ENCODE measurements at regions of chr10 and their contacts with region 1.

Region 1: DNA sequence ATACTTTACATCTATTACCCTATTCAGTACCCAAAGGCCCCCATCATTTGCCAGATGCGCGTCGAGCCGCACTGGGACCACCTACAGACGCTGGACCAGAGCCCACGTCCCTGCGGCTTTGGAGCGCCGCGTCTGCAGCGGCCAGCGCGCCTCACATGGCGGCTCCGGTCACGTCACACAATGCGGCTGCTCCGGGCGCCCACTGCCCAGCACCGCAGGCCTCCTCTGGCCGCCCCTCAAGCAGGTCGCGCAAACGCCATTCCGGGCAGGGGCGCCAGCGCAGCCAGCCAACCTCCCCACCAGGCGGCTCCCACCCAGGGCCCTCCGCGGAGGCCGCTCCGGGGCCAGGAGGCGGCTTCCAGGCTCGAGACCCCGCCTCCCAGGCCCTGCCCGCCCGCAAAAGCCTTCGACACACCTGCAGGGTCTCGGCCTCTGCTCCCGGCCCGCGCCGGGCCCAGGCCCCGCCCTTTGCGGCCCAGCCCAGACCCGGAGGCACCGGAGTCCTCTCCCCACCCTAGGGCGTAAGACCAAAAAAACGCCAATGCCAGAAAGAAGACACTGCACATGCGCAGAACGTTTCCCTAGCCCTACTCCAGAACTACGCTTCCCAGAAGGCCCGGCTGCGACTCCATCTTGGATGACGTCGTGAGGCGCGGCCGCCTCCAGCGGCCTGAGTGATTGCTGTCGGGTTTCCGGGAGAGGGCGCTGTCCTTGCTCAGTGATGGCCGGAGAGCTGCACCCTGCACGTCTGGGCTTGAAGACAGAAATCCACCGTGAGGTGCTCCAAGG is at the start of gene ZNF25:
- DNase-seq: peak; percentile 95 to 100 (median 98)
- ATAC-seq: peak; percentile 87
- H3K4me3 ChIP-seq: peak within 1 kb of the TSS; percentile 62 to 74
- H3K4me3 Mint-ChIP-seq: peak within 1 kb of the TSS; percentile 89
- H3K27ac ChIP-seq: peak within 1 kb of the TSS; percentile 84 to 85
- H3K27ac Mint-ChIP-seq: peak within 1 kb of the TSS; percentile 94
- H3K4me1 ChIP-seq: peaks cover 15% of the 10 kb centered on the region
- H3K4me1 Mint-ChIP-seq: peaks cover 29% of the 10 kb centered on the region
- H3K27me3 ChIP-seq: no peaks in the 10 kb centered on the region
- H3K27me3 Mint-ChIP-seq: no peaks in the 10 kb centered on the region
- CTCF ChIP-seq: peak; percentile 87
- total RNA-seq, gene ZNF25: 3.0 to 3.7 TPM

Region 2: GRCh38 chr10:37857287-37858211 is 118.7 kb before region 1 on chr10 and contains the start of gene ZNF248:
- CTCF ChIA-PET with region 1: interaction called, 4 read pairs
- POLR2A ChIA-PET with region 1: interaction called, 5 read pairs
- intact Hi-C with region 1: loop called (anchors 1 kb)
- DNase-seq: peak; percentile 89 to 98 (median 94)
- ATAC-seq: peak; percentile 96
- H3K4me3 ChIP-seq: peak within 1 kb of the TSS; percentile 86 to 96
- H3K4me3 Mint-ChIP-seq: peak within 1 kb of the TSS; percentile 91
- H3K27ac ChIP-seq: peak within 1 kb of the TSS; percentile 89 to 96
- H3K27ac Mint-ChIP-seq: peak within 1 kb of the TSS; percentile 99
- H3K4me1 ChIP-seq: peaks cover 27% of the 10 kb centered on the region
- H3K4me1 Mint-ChIP-seq: peaks cover 41% of the 10 kb centered on the region
- H3K27me3 ChIP-seq: no peaks in the 10 kb centered on the region
- H3K27me3 Mint-ChIP-seq: no peaks in the 10 kb centered on the region
- CTCF ChIP-seq: no peak
- total RNA-seq, gene ZNF248: 2.3 to 2.9 TPM

Region 3: GRCh38 chr10:38010119-38010903 is 34.0 kb after region 1 on chr10 and contains the start of gene ZNF33A:
- CTCF ChIA-PET with region 1: interaction called, 18 read pairs
- POLR2A ChIA-PET with region 1: interaction called, 19 read pairs
- intact Hi-C with region 1: loop called (anchors 1 kb)
- DNase-seq: peak; percentile 79 to 98 (median 91)
- ATAC-seq: peak; percentile 82
- H3K4me3 ChIP-seq: peak within 1 kb of the TSS; percentile 74 to 78
- H3K4me3 Mint-ChIP-seq: peak within 1 kb of the TSS; percentile 81
- H3K27ac ChIP-seq: peak within 1 kb of the TSS; percentile 98 to 99
- H3K27ac Mint-ChIP-seq: peak within 1 kb of the TSS; percentile 100
- H3K4me1 ChIP-seq: peaks cover 14% of the 10 kb centered on the region
- H3K4me1 Mint-ChIP-seq: peaks cover 39% of the 10 kb centered on the region
- H3K27me3 ChIP-seq: no peaks in the 10 kb centered on the region
- H3K27me3 Mint-ChIP-seq: no peaks in the 10 kb centered on the region
- CTCF ChIP-seq: no peak
- total RNA-seq, gene ZNF33A: 24.6 to 25.9 TPM

Region 4: DNA sequence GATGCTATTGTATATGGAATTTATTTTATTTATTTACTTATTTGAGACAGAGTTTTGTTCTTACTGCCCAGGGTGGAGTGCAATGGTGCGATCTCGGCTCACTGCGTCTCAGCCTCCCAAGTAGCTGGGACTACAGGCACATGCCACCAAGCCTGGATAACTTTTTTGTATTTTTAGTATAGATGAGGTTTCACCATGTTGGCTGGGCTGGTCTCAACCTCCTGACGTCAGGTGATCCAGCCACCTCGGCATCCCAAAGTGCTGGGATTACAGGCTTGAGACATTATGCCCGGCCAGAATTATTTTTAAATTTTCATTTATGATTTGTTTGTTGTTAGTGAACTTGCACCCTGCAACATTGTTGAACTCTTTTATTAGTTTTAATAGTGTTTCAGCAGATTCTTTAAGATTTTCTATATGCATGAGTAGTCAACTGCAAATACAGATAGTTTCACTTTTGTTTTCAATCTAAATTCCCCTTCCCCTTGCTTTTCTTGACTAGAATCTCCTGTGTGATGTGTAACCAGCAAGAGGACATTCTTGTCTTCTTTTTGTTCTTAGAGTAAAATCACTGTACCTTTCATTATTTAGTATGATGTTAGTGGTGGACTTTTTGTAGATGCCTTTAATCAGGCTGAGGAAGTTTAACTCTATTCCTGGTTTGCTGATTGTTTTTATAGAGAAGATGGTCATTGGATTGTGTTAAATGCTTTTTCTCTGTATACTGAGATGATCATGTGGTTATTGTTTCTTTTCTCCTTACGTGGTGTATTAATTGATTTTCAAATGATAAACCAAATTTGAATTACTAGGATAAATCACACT is 62.0 kb after region 1 on chr10:
- CTCF ChIA-PET with region 1: no interaction called
- POLR2A ChIA-PET with region 1: no interaction called
- intact Hi-C with region 1: loop called in 1 of 2 experiments (anchors 1 kb)
- DNase-seq: peak in 2 of 9 experiments; percentile 37 to 62
- ATAC-seq: peak; percentile 66
- H3K4me3 ChIP-seq: peak overlapping the region in 1 of 2 experiments; percentile 37
- H3K4me3 Mint-ChIP-seq: peak overlapping the region; percentile 80
- H3K27ac ChIP-seq: peak overlapping the region in 1 of 2 experiments; percentile 77
- H3K27ac Mint-ChIP-seq: peak overlapping the region; percentile 92
- H3K4me1 ChIP-seq: peaks cover 3% of the 10 kb centered on the region
- H3K4me1 Mint-ChIP-seq: peaks cover 44% of the 10 kb centered on the region
- H3K27me3 ChIP-seq: no peaks in the 10 kb centered on the region
- H3K27me3 Mint-ChIP-seq: no peaks in the 10 kb centered on the region
- CTCF ChIP-seq: no peak

Region 5: GRCh38 chr10:38094158-38094920 is 118.1 kb after region 1 on chr10 and contains the start of gene ZNF37A:
- CTCF ChIA-PET with region 1: interaction called, 9 read pairs
- POLR2A ChIA-PET with region 1: interaction called, 7 read pairs
- intact Hi-C with region 1: loop called (anchors 1 kb)
- DNase-seq: peak; percentile 75 to 95 (median 89)
- ATAC-seq: peak; percentile 97
- H3K4me3 ChIP-seq: peak within 1 kb of the TSS; percentile 52 to 89
- H3K4me3 Mint-ChIP-seq: peak within 1 kb of the TSS; percentile 89
- H3K27ac ChIP-seq: peak within 1 kb of the TSS; percentile 83 to 91
- H3K27ac Mint-ChIP-seq: peak within 1 kb of the TSS; percentile 95
- H3K4me1 ChIP-seq: peaks cover 16% of the 10 kb centered on the region
- H3K4me1 Mint-ChIP-seq: peaks cover 35% of the 10 kb centered on the region
- H3K27me3 ChIP-seq: no peaks in the 10 kb centered on the region
- H3K27me3 Mint-ChIP-seq: no peaks in the 10 kb centered on the region
- CTCF ChIP-seq: no peak
- total RNA-seq, gene ZNF37A: 12.4 to 12.8 TPM

Region 6: GRCh38 chr10:38184476-38184875 is 208.2 kb after region 1 on chr10:
- CTCF ChIA-PET with region 1: no interaction called
- POLR2A ChIA-PET with region 1: no interaction called
- intact Hi-C with region 1: loop called in 1 of 2 experiments (anchors 10 kb)
- DNase-seq: no peak
- ATAC-seq: no peak
- H3K4me3 ChIP-seq: no peak overlapping the region
- H3K4me3 Mint-ChIP-seq: no peak overlapping the region
- H3K27ac ChIP-seq: no peak overlapping the region
- H3K27ac Mint-ChIP-seq: no peak overlapping the region
- H3K4me1 ChIP-seq: no peaks in the 10 kb centered on the region
- H3K4me1 Mint-ChIP-seq: no peaks in the 10 kb centered on the region
- H3K27me3 ChIP-seq: no peaks in the 10 kb centered on the region
- H3K27me3 Mint-ChIP-seq: peaks cover 6% of the 10 kb centered on the region
- CTCF ChIP-seq: no peak